ENCODE measurements at regions of chr4 and their contacts with region 1.

Region 1: DNA sequence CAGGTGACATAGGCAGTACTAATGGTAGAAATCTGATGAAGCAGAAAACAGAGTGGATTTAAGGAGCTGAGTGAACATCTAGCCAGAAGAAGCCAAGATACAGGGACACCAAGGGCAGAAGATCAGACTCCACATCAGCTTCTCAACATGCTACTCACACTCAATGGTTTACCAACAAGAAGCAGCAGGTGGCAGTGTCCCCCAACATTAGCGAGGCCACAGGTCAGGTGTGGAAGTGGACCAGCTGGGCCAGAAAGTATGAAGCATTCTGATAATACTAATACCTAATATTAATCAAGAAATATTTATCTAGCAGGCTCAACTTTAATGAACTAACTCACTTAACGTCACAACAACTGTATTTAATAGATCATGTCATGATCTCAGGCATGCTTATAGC is 73.4 kb upstream of the TTC29 start:
- DNase-seq: peak; percentile 49 to 63
- ATAC-seq: peak; percentile 63 to 90 (median 76)
- H3K4me3 ChIP-seq: no peak overlapping the region
- H3K27ac ChIP-seq: no peak overlapping the region
- H3K4me1 ChIP-seq: no peaks in the 10 kb centered on the region
- H3K27me3 ChIP-seq: peaks cover 0 to 17% (median 0%) of the 10 kb centered on the region in 7 donors
- CTCF ChIP-seq: peak; percentile 28 to 78 (median 66)

Region 2: GRCh38 chr4:147096667-147097604 is 77.9 kb after region 1 on chr4:
- intact Hi-C with region 1: loop called (anchors 1 to 5 kb)
- DNase-seq: no peak
- ATAC-seq: peak in 3 of 8 donors; percentile 22 to 65 (median 47)
- H3K4me3 ChIP-seq: no peak overlapping the region
- H3K27ac ChIP-seq: no peak overlapping the region
- H3K4me1 ChIP-seq: peaks cover 0 to 5% (median 0%) of the 10 kb centered on the region in 9 donors
- H3K27me3 ChIP-seq: no peaks in the 10 kb centered on the region
- CTCF ChIP-seq: peak; percentile 61 to 85 (median 71)

Region 3: GRCh38 chr4:147571021-147571770 is 552.1 kb after region 1 on chr4:
- intact Hi-C with region 1: no loop called
- DNase-seq: no peak
- ATAC-seq: no peak
- H3K4me3 ChIP-seq: no peak overlapping the region
- H3K27ac ChIP-seq: no peak overlapping the region
- H3K4me1 ChIP-seq: no peaks in the 10 kb centered on the region
- H3K27me3 ChIP-seq: no peaks in the 10 kb centered on the region
- CTCF ChIP-seq: no peak

Measured in heart right ventricle (tissue), 16 donors.